A549 (cell line): ENCODE measurements at regions of chr19 and their contacts with region 1.

Region 1: DNA sequence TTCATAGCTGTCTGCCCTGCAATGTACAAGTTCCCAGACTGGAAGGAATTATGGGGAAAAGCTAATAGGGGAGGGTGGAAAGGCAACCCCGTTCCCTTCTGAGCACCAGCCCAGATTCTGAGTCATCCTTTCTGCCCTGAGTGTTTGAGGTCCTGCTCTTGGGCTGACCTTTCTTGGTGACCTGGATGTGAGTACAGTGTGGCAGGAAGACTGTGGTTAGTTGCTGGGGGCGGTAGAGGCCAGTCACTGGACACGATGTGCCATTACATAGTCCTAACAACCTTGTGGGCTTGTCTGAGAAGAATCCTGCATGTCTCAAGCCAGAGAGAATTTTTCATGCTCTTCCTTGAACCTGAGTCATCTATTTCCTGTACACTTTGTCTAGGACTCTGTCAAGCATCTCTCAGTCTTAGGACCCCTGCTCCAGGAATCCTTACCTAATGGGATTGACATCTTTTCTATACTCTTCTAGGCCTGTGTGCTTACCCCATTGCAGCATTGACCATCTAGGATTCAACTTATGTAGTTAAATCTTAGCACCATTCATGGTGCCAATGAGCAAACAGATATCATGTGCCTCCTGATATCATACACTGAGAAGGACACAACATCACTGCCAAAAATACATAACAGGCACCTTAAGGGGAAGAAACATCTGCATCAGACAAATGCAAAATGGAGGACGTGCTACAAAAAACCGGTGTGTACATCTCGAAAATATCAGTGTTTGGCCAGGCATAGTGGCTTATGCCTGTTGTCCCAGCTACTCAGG is 8.1 kb upstream of the ANGPTL4 start:
- DNase-seq: peak in 1 of 2 experiments; percentile 91
- ATAC-seq: peak; percentile 88 to 94
- H3K4me3 ChIP-seq: no peak overlapping the region
- H3K27ac ChIP-seq: peak overlapping the region; percentile 90 to 91
- H3K4me1 ChIP-seq: peaks cover 46% of the 10 kb centered on the region
- CTCF ChIP-seq: no peak
- EP300 ChIP-seq: no peak
- POLR2A ChIP-seq: no peak
- RAD21 ChIP-seq: peak; percentile 19 to 30; a peak in 2 of 5 replicates

Region 2: GRCh38 chr19:7925171-7925851 is 430.5 kb before region 1 on chr19:
- CTCF ChIA-PET with region 1: no interaction called
- POLR2A ChIA-PET with region 1: no interaction called
- DNase-seq: peak; percentile 71 to 75
- ATAC-seq: peak; percentile 48 to 55; a peak in 5 of 6 replicates
- H3K4me3 ChIP-seq: peak overlapping the region; percentile 82
- H3K27ac ChIP-seq: peak overlapping the region; percentile 80 to 92
- H3K4me1 ChIP-seq: peaks cover 28% of the 10 kb centered on the region
- CTCF ChIP-seq: peak; percentile 79
- EP300 ChIP-seq: no peak
- POLR2A ChIP-seq: no peak
- RAD21 ChIP-seq: peak; percentile 21 to 47; a peak in 4 of 5 replicates

Region 3: DNA sequence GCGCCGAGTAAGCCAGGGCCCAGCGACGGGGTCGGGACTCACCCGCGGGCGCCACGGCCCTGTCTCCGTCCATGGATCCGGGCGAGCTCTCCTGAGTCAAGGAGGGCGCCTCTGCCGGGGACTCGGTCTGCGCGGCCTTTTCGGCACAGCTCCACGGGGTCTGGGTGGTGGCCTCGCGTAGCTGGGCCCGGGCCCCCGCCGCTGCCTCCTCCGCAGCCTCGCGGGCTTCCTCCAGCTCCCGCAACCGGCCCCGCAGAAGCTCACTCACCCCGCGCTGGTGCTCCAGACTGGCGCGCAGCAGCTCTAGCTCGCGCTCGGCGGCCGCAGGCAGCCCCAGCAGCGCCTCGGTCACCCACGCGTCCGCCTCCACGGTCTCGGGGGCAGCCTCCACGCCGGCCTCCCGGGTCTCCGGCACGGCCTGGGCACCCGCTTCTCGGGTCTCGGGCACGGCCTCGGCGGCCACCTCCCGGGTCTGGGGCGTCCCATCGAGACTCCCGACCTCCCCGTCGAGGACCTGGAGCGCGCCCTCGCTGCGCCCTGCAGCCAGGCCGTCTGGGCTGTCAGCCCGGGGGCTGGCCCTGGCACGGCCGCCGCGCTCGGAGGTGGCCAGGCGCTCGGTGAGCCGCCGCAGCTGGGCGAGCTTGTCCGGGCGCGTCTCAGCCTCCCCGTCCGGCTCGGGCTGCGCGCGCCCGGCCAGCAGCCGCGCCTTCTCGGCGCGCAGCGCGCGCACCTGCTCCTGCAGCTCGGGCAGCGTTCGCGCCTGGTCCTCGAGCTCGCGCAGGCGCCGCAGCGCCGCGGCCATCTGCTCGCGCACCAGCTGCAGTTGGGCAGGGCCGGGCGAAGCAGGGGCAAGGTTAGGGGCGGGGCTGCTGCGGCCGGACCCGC is 21.1 kb before region 1 on chr19:
- CTCF ChIA-PET with region 1: interaction called, 43 read pairs
- POLR2A ChIA-PET with region 1: no interaction called
- DNase-seq: peak; percentile 76 to 84
- ATAC-seq: peak; percentile 77 to 83
- H3K4me3 ChIP-seq: peak overlapping the region; percentile 56
- H3K27ac ChIP-seq: peak overlapping the region; percentile 89 to 95
- H3K4me1 ChIP-seq: peaks cover 7% of the 10 kb centered on the region; the same call in 2 of the 3 replicates
- CTCF ChIP-seq: no peak
- EP300 ChIP-seq: no peak
- POLR2A ChIP-seq: peak; percentile 30; the same call in 1 of the 2 replicates
- RAD21 ChIP-seq: no peak

Region 4: DNA sequence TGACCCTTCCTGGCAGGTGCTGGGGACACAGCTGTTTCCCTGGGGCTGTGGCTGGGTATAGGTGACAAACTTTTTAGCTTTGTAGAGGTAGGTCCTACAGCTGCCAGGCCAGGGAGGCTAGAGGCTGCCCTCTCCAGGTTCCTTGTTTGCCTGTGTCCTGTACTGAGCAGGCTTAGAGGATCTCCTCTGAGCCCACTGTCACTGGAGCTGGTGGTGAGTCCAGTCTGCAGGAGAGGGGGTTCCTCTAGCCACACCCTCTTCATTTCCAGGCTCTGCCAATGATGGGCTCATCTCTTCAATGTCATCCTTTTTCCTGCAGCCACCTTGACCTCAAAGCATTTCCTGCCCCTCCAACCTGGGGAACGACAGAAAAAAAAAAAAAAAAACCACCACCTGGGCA is 21.8 kb after region 1 on chr19:
- CTCF ChIA-PET with region 1: interaction called, 18 read pairs
- POLR2A ChIA-PET with region 1: interaction called, 3 read pairs
- DNase-seq: no peak
- ATAC-seq: peak in 1 of 2 experiments; percentile 27; a peak in 3 of 6 replicates
- H3K4me3 ChIP-seq: no peak overlapping the region
- H3K27ac ChIP-seq: no peak overlapping the region; a peak in 1 of 6 replicates
- H3K4me1 ChIP-seq: peaks cover 11% of the 10 kb centered on the region; the same call in 1 of the 3 replicates
- CTCF ChIP-seq: no peak
- EP300 ChIP-seq: no peak
- POLR2A ChIP-seq: no peak
- RAD21 ChIP-seq: no peak

Region 5: DNA sequence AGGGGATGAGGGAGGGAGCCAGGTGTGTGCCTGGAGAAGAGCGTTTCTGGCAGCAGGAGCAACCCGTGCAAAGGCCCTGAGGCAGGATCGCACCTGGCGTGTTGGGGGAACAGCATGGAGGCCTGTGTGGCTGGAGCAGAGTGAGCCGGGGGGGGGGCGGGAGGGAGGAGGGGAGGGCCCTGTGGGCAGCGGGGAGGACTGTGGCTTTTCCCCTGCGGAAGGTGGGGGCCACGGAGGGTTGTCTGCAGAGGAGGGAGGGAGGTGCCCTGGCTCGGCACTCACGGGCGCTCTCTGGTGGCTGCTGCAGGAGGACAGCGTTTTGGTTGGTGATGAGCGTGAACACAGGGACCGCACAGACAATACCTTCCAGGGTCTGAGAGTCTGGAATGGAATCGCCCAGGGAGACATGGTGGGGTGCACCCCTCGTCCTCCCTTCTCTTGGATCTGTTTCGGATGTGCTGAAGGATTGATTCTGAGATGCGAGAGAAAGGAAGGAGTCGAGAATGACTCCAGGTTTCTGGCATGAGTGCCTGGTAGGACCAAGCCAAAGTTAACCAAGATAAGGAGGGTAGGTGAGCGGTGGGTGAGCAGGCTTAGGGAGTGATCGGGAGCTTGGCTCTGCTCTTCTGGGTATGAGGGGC is 40.9 kb after region 1 on chr19:
- CTCF ChIA-PET with region 1: interaction called, 71 read pairs
- POLR2A ChIA-PET with region 1: no interaction called
- DNase-seq: peak; percentile 38 to 69
- ATAC-seq: peak; percentile 67 to 73
- H3K4me3 ChIP-seq: no peak overlapping the region
- H3K27ac ChIP-seq: peak overlapping the region; percentile 52 to 78; a peak in 4 of 6 replicates
- H3K4me1 ChIP-seq: peaks cover 51% of the 10 kb centered on the region
- CTCF ChIP-seq: peak; percentile 60
- EP300 ChIP-seq: no peak
- POLR2A ChIP-seq: no peak
- RAD21 ChIP-seq: peak; percentile 61 to 68

Region 6: DNA sequence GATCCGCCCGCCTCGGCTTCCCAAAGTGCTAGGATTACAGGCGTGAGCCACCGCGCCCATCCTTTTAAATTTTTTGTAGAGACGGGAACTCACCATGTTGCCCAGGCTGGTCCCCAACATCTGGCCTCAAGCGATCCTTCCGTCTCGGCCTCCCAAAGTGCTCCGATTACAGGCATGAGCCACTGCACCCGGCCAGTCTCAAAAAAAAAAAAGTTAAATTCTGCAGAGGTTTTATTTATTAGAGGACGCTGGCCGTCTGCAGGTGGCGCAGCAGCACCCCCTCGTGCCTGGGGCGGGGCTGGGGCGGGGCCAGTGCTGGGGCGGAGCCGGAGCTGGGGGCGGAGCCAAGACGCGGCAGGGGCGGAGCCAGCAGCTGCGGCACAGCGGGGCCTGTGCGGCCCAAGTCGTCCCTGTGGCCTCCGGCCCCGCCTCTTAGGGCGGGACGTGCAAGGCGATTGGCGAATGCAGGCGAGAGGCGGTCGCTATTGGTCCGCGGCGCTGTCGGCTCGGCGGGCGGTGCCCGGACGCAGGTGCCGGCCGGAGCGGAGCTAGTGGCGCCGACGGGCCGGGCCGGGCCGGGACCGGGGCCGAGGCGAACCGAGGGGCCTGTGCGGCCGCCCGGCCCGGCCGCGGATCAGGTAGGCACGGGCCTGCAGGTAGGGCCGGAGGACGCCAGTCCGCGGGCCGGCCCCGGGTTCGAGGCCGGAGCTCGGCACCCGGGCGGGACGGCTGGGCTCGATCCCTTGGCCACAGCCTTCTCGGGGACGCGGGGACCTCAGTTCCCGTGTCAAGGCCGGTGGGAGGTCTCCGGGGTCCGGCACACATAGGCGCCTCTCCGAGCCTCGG is 57.2 kb after region 1 on chr19 and contains the start of gene MARCHF2:
- CTCF ChIA-PET with region 1: interaction called, 15 read pairs
- POLR2A ChIA-PET with region 1: no interaction called
- DNase-seq: peak; percentile 66 to 96
- ATAC-seq: peak; percentile 99
- H3K4me3 ChIP-seq: peak within 1 kb of the TSS; percentile 92
- H3K27ac ChIP-seq: peak within 1 kb of the TSS; percentile 89 to 91
- H3K4me1 ChIP-seq: peaks cover 4% of the 10 kb centered on the region; the same call in 1 of the 3 replicates
- CTCF ChIP-seq: peak; percentile 60
- EP300 ChIP-seq: no peak
- POLR2A ChIP-seq: peak; percentile 30; the same call in 1 of the 2 replicates
- RAD21 ChIP-seq: peak; percentile 53 to 66
- polyA plus RNA-seq, gene MARCHF2: 12.4 and 12.8 TPM in 2 replicates

Region 7: DNA sequence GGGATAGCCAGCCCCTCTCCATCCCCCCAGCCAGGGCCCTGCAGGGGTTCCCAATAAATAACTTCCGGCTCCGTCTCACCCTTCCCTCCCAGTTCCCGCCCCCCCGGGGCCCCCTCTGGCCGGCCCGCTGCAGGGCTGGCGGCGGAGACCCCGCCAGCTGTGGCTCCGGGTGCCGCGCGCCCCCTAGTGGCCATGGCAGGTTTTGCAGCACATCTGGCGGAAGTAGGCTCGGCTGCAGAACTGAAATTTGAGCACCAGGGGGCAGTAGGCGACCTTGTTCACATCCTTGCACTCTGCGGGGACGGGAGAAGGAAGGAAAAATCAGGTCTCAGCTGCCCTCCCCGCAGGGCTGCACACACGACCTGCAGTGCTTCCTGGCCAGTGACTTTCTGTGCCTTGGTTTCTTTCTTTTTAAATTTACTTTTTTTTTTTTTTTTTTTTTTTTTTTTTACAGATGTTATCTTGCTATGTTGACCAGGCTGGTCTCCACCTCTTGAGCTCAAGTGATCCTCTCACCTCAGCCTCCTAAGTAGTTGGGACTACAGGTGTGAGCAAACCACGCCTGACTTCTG is 225.0 kb after region 1 on chr19:
- CTCF ChIA-PET with region 1: interaction called, 11 read pairs
- POLR2A ChIA-PET with region 1: interaction called, 3 read pairs
- DNase-seq: peak; percentile 50 to 81
- ATAC-seq: peak; percentile 57 to 74; a peak in 5 of 6 replicates
- H3K4me3 ChIP-seq: no peak overlapping the region
- H3K27ac ChIP-seq: peak overlapping the region; percentile 29 to 75; a peak in 5 of 6 replicates
- H3K4me1 ChIP-seq: peaks cover 30% of the 10 kb centered on the region
- CTCF ChIP-seq: peak; percentile 96
- EP300 ChIP-seq: no peak
- POLR2A ChIP-seq: no peak
- RAD21 ChIP-seq: peak; percentile 84 to 87